Activated CD8-positive, alpha-beta memory T cell treated with anti-CD3 and anti-CD28 coated beads, Interleukin-2, amount 10 ng/mL, durations not matched to agents 7 days and 5 days (primary cell): ENCODE measurements at regions of chr17 and their contacts with region 1.

Region 1: DNA sequence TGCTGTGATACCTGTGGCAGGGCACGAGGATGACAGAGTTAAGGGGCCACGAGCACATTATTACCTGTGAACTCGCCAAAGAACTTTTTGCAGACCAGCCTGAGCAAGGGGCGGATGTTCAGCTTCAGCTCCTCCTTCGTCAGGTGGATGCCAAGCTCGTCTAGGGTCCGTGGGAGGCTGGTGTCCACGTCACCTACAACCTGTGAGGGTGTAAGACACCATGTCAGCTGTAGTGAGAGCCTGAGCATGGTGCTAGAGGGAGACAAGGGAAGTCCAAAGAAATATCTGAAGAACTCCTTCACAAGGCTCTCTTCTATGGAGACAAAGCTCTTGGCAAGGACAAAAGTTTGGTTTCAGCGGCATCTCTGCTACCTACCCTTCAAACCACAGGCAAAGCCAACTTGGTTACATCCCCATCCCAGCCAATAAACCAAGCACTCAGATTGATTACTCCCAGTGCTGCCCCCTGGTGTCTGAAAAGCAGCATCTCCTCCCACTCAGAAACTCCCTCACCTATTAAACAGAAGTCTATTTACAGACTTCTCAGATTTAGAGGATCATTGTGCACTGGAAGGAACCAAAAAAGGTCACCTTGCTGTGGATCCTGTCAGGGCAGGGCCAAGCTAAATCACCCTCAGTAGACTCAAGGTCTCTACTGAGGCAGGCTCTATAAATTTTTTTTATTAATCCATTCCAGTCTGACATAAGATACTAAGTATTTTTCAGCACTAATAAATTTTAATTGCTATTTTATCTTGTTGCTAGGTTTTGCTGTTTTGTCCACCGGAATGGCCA is 17.4 kb downstream of the HIGD1B start:
- DNase-seq: peak; percentile 77
- ATAC-seq: peak; percentile 81
- H3K4me3 Mint-ChIP-seq: no peak overlapping the region
- H3K27ac Mint-ChIP-seq: no peak overlapping the region
- H3K4me1 Mint-ChIP-seq: peaks cover 1% of the 10 kb centered on the region
- H3K27me3 Mint-ChIP-seq: no peaks in the 10 kb centered on the region

Region 2: GRCh38 chr17:44850612-44851011 is 14.5 kb before region 1 on chr17:
- CTCF ChIA-PET with region 1: interaction called, 16 read pairs
- DNase-seq: no peak
- ATAC-seq: no peak
- H3K4me3 Mint-ChIP-seq: no peak overlapping the region
- H3K27ac Mint-ChIP-seq: no peak overlapping the region
- H3K4me1 Mint-ChIP-seq: no peaks in the 10 kb centered on the region
- H3K27me3 Mint-ChIP-seq: no peaks in the 10 kb centered on the region

Region 3: GRCh38 chr17:44878627-44879221 is 13.7 kb after region 1 on chr17:
- CTCF ChIA-PET with region 1: interaction called, 17 read pairs
- DNase-seq: peak; percentile 47
- ATAC-seq: no peak
- H3K4me3 Mint-ChIP-seq: no peak overlapping the region
- H3K27ac Mint-ChIP-seq: peak overlapping the region; percentile 37
- H3K4me1 Mint-ChIP-seq: no peaks in the 10 kb centered on the region
- H3K27me3 Mint-ChIP-seq: no peaks in the 10 kb centered on the region

Region 4: GRCh38 chr17:45006927-45007461 is 141.9 kb after region 1 on chr17:
- CTCF ChIA-PET with region 1: no interaction called
- DNase-seq: no peak
- ATAC-seq: no peak
- H3K4me3 Mint-ChIP-seq: no peak overlapping the region
- H3K27ac Mint-ChIP-seq: no peak overlapping the region
- H3K4me1 Mint-ChIP-seq: peaks cover 5% of the 10 kb centered on the region
- H3K27me3 Mint-ChIP-seq: peaks cover 19% of the 10 kb centered on the region